A549 (cell line): ENCODE measurements at regions of chr9 and their contacts with region 1.

Region 1: GRCh38 chr9:130866474-130866965 is 30.1 kb downstream of the QRFP start:
- DNase-seq: peak; percentile 79 to 93
- ATAC-seq: peak; percentile 97
- H3K4me3 ChIP-seq: no peak overlapping the region
- H3K27ac ChIP-seq: no peak overlapping the region
- H3K4me1 ChIP-seq: no peaks in the 10 kb centered on the region
- CTCF ChIP-seq: peak; percentile 95
- EP300 ChIP-seq: no peak
- POLR2A ChIP-seq: no peak
- RAD21 ChIP-seq: peak; percentile 76 to 78

Region 2: DNA sequence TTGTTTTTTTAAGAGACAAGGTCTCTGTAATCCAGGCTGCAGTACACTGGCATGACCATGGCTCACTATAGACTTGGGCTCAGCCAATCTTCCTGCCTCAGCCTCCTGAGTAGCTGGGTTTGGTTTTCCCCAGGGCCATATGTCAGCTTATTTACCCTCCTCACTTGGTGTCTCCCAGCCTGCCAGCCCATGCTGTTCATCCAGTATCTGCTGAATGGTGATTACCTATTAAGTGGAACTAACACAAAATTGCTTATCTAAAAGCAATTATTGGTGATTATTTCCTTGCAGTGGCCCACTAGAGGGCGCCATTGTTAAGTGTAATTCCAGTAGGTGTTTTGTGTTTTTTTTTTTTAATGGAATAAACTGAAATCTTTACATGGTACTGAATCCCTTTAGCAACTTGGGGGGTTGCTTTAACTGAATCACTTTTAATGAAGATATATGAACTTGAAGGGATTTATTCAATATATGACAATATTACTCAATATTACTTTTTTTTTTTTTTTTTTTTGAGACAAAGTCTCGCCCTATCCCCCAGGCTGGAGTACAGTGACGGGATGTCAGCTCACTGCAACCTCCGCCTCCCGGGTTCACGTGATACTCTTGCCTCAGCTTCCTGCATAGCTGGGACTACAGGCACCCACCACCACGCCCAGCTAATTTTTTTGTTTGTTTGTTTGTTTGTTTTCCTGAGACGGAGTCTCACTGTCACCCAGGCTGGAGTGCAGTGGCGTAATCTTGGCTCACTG is 159.1 kb before region 1 on chr9:
- CTCF ChIA-PET with region 1: interaction called, 176 read pairs
- POLR2A ChIA-PET with region 1: interaction called, 3 read pairs
- DNase-seq: peak; percentile 33 to 68
- ATAC-seq: peak; percentile 80 to 85
- H3K4me3 ChIP-seq: no peak overlapping the region
- H3K27ac ChIP-seq: no peak overlapping the region
- H3K4me1 ChIP-seq: peaks cover 11% of the 10 kb centered on the region; the same call in 1 of the 3 replicates
- CTCF ChIP-seq: peak; percentile 95
- EP300 ChIP-seq: no peak
- POLR2A ChIP-seq: no peak
- RAD21 ChIP-seq: peak; percentile 76

Region 3: DNA sequence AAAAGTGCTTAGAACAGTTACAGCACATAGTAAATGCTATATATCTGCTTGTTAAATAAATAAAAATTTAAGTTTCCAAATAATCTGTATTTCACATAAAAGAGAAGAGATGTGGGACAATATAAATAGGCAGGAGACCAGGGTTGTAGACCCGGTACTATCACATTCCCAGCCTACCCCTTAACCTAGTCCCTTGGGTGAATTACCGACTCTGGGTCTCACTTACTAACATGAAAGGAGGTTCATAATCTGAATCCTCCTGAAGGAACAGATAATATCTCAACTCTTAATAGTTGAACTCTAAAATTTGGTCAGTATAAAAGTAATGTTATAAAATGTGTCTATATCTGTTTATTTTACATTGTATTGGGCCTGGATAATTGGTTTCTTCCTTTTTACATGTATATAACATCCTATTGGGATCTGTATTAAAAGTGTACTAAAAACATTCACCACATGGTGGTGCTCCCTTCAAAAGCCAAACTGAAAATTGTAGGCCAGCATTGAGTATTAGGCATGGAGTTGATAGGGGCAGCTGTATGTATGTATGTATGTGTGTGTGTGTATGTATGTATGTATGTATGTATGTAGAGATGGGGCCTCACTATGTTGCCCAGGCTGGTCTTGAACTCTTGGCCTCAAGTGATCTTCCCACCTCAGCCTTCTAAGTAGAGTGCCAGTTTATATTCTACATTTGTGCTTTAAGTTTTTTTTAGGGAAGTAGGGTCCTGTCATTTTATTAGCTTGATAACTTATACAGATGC is 95.7 kb before region 1 on chr9:
- CTCF ChIA-PET with region 1: interaction called, 454 read pairs
- POLR2A ChIA-PET with region 1: interaction called, 3 read pairs
- DNase-seq: peak; percentile 71 to 72
- ATAC-seq: peak; percentile 90 to 98
- H3K4me3 ChIP-seq: no peak overlapping the region
- H3K27ac ChIP-seq: no peak overlapping the region
- H3K4me1 ChIP-seq: 0 out of 3 replicates have a peak, but pooled peaks cover 6% of the 10 kb centered on the region
- CTCF ChIP-seq: peak; percentile 87
- EP300 ChIP-seq: no peak
- POLR2A ChIP-seq: no peak
- RAD21 ChIP-seq: peak; percentile 86 to 89

Region 4: GRCh38 chr9:130884980-130885696 is 18.6 kb after region 1 on chr9:
- CTCF ChIA-PET with region 1: interaction called, 97 read pairs
- POLR2A ChIA-PET with region 1: no interaction called
- DNase-seq: no peak
- ATAC-seq: no peak
- H3K4me3 ChIP-seq: no peak overlapping the region
- H3K27ac ChIP-seq: peak overlapping the region in 1 of 2 experiments; percentile 75; a peak in 3 of 6 replicates
- H3K4me1 ChIP-seq: no peaks in the 10 kb centered on the region
- CTCF ChIP-seq: no peak
- EP300 ChIP-seq: no peak
- POLR2A ChIP-seq: no peak
- RAD21 ChIP-seq: no peak

Region 5: GRCh38 chr9:130940693-130941576 is 74.4 kb after region 1 on chr9:
- CTCF ChIA-PET with region 1: interaction called, 41 read pairs
- POLR2A ChIA-PET with region 1: no interaction called
- DNase-seq: peak; percentile 73 to 74
- ATAC-seq: peak; percentile 54 to 74
- H3K4me3 ChIP-seq: no peak overlapping the region
- H3K27ac ChIP-seq: peak overlapping the region in 1 of 2 experiments; percentile 12; a peak in 1 of 6 replicates
- H3K4me1 ChIP-seq: peaks cover 46% of the 10 kb centered on the region
- CTCF ChIP-seq: peak; percentile 82
- EP300 ChIP-seq: no peak
- POLR2A ChIP-seq: no peak
- RAD21 ChIP-seq: peak; percentile 87 to 89

Region 6: DNA sequence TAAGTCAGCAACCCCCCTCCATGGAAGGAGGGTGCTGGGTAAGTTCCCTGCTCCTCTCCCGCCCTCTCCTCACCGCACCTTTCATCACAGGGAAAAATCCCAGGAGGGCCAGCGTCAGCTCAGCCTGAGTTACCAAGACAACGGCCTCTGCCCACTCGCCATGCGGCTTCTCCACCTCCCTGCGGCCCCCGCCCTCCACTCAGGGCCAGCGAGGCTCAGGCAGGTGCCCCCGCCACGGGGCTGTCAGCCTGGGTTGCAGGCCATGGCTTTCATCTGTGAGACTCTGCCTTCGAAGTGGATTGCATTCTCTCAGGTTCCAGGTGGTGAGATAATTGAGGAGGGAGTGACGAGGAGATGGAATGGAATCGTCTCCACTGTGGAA is 115.2 kb after region 1 on chr9:
- CTCF ChIA-PET with region 1: interaction called, 18 read pairs
- POLR2A ChIA-PET with region 1: no interaction called
- DNase-seq: no peak
- ATAC-seq: no peak
- H3K4me3 ChIP-seq: no peak overlapping the region
- H3K27ac ChIP-seq: no peak overlapping the region
- H3K4me1 ChIP-seq: no peaks in the 10 kb centered on the region
- CTCF ChIP-seq: no peak
- EP300 ChIP-seq: no peak
- POLR2A ChIP-seq: no peak
- RAD21 ChIP-seq: no peak

Region 7: DNA sequence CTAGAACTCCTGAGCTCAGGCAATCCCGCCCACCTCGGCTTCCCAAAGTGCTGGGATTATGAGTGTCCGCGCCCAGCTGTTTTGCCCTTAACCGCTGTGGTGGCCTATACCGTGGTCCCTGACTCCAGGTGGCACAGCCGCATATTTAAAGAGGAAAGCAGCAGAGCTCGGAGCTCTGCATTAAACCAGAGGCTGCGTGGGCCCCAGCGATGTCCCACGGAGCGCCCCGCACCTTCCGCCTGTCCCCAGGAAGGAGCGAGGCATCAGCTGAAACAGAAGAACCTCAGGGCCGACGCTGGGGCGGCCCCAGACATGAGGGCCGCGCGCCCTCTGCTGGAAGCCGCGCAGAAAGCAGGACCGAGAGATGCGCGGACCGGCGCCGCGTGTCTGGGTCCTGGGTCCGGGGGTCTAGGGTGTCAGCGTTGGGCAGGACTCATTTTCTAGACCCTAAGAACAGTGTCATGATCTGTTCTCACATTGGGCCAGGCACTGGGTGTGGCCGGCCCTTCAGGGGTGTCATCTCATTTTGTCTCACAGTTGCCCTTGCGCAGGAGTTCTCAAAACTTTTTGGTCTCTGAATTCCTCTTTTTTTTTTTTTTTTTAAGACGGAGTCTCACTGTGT is 180.2 kb after region 1 on chr9:
- CTCF ChIA-PET with region 1: interaction called, 146 read pairs
- POLR2A ChIA-PET with region 1: interaction called, 10 read pairs
- DNase-seq: peak; percentile 65 to 69
- ATAC-seq: peak; percentile 83 to 96
- H3K4me3 ChIP-seq: no peak overlapping the region
- H3K27ac ChIP-seq: no peak overlapping the region
- H3K4me1 ChIP-seq: no peaks in the 10 kb centered on the region
- CTCF ChIP-seq: peak; percentile 95
- EP300 ChIP-seq: no peak
- POLR2A ChIP-seq: no peak
- RAD21 ChIP-seq: peak; percentile 89 to 94